ENCODE measurements at regions of chr12 and their contacts with region 1.

Region 1: DNA sequence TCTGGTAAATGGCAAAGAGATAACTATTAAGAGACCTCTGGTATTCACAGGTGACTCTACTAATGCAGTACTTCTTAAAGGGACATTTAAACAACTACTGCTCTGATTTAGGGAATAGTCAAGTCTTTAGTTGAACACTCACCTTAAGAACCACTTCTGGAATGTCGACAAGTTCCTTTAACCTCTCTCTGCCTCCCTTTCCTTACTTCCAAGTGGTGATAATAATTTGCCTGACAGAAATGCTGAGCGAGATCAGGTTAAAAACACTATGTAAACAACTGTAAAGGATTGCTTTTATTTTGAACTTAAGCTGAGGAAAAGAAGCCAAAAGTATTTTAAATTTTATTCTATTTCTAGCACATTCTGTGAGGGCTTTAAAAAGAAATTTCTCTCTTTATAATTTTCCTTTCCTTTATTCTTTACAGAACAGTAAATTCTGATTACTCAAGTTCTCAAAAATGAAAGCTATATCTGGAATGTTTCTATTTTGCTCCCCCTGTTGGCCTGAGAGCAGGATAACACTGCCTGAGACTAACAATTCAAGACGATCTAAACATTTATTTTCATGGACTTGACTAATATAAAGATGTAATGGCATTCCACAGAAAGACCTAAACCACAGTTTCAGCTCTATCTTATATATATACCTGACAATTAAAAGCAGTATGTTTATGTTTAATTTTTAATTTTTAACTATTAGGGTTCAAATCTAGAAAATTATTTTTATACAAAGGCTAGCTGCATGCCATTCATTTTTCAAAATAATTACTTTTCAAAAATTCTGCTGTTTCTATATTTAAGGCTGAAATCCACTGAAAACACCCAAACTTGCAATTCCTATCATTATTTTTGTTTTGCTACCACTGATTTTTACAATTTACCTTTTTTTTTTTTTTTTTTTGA is 29.2 kb downstream of the ZCCHC8 start:
- DNase-seq: no peak
- ATAC-seq: peak in 5 of 8 donors; percentile 41 to 67 (median 59)
- H3K4me3 ChIP-seq: no peak overlapping the region
- H3K27ac ChIP-seq: peak overlapping the region in 5 of 10 donors; percentile 21 to 60 (median 33)
- H3K4me1 ChIP-seq: peaks cover 0 to 17% (median 6%) of the 10 kb centered on the region in 9 donors
- H3K27me3 ChIP-seq: no peaks in the 10 kb centered on the region
- CTCF ChIP-seq: peak; percentile 47 to 89 (median 78)

Region 2: GRCh38 chr12:122336015-122336946 is 135.3 kb before region 1 on chr12:
- intact Hi-C with region 1: loop called in 2 of 10 experiments (anchors 5 to 10 kb)
- DNase-seq: peak in 1 of 2 donors; percentile 35
- ATAC-seq: no peak
- H3K4me3 ChIP-seq: no peak overlapping the region
- H3K27ac ChIP-seq: no peak overlapping the region
- H3K4me1 ChIP-seq: no peaks in the 10 kb centered on the region
- H3K27me3 ChIP-seq: no peaks in the 10 kb centered on the region
- CTCF ChIP-seq: peak; percentile 38 to 66 (median 62)

Region 3: DNA sequence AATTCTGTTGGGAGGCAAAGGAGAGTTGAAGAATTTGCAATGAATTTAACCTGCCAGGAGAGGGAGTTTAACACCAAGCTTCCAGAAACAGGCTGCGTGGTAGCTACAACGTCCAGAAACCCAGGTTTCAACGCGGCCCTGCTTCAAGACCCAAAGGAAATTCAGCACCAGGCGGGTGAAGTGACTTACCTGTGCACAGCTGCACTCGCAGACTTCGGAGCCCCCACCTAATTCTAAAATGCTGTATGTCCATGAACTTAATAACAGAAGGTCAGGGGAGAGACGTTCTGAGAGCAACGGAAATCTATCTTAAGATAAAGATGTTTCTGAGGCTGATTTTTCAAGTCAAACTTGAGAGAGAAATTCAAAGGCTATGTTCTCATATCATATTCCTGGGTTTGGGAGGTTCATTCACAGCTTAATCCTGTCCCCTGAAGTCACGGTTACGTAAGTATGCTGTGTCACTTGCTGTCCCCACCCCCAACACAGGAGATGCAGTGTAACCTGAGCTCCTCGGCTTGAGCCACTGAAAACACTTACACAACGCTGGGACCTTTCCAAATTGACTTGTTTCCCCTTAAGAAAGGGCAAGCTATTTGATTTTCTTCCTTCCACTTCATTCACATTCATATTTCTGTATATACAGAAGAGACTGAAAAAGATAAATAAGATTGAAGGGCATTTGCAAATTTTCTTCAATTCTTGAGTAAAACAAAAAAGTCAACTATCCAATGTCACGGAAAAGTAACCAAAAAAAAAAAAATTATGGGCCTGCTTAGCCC is 71.8 kb before region 1 on chr12:
- intact Hi-C with region 1: loop called (anchors 1 to 5 kb)
- DNase-seq: peak; percentile 25 to 76
- ATAC-seq: peak; percentile 81 to 93 (median 91)
- H3K4me3 ChIP-seq: peak overlapping the region in 7 of 10 donors; percentile 11 to 35 (median 28)
- H3K27ac ChIP-seq: peak overlapping the region; percentile 38 to 92 (median 86)
- H3K4me1 ChIP-seq: peaks cover 3 to 42% (median 19%) of the 10 kb centered on the region in 9 donors
- H3K27me3 ChIP-seq: no peaks in the 10 kb centered on the region
- CTCF ChIP-seq: peak; percentile 41 to 81 (median 67)

Measured in heart right ventricle (tissue), 16 donors.